PC-3 (cell line): ENCODE measurements at regions of chr14 and their contacts with region 1.

Region 1: DNA sequence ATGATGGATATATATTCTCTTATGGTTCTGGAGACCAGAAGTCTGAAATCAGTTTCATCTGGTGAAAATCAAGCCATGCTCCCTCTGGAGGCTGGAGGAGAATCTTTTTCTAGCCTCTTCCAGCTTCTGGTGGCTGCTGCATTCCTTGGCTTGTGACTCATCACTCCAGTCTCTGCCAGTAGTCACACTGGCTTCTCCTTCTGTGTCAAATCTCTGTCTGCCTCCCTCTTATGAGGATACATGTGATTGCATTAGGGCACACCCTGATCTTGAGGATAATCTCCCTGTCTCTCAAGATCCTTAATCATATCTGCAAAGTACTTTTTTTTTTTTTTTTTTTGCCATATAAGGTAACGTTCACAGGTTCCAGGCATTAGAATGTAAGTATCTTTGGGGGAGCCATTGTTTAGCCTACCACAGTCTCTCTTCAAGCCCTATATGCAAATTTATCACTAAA is 17.7 kb downstream of the DNAL1 start:
- DNase-seq: peak; percentile 95
- ATAC-seq: peak; percentile 99
- H3K4me3 ChIP-seq: no peak overlapping the region
- H3K27ac ChIP-seq: 0 out of 2 replicates have a peak overlapping the region, but pooled peaks have one; percentile 9
- H3K4me1 ChIP-seq: peaks cover 12% of the 10 kb centered on the region
- H3K27me3 ChIP-seq: no peaks in the 10 kb centered on the region
- CTCF ChIP-seq: peak; percentile 72

Region 2: DNA sequence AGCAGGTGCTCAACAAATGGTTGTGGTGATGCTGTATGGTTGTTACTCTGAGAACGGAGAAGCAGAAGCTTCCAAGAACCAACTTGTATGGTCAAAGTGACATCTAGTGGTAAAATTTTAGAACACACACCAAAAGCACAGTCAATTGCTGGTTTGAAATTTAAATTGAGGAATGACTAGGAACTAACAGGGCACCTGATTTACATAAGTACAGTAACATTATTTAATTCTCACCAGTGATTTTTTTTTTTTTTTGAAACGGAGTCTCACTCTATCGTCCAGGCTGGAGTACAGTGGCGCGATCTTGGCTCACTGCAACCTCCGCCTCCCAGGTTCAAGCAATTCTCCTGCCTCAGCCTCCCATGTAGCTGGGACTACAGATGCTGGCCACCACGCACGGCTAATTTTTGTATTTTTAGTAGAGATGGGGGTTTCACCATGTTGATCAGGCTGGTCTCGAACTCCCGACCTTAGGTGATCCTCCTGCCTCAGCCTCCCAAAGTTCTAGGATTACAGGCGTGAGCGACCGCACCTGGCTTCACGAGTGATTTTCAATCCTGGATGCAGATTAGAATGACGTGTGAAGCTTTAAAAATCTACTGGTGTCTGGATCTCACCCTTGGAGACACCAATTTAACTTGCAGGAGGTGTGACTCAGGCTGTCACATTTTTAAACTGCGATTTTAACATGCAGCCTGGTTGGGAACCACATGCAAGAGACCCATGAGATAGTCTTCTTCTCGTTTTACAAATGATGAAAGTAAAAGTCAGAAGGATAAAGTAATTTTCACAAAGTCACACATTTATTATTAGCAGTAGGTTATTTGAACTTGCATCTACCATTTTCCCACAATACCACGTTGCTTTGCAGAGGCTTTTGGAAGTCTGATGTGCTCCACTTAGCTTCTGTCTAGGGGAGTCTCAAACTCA is 190.1 kb before region 1 on chr14:
- CTCF ChIA-PET with region 1: no interaction called
- POLR2A ChIA-PET with region 1: no interaction called
- intact Hi-C with region 1: no loop called
- DNase-seq: peak; percentile 87
- ATAC-seq: peak; percentile 88
- H3K4me3 ChIP-seq: no peak overlapping the region
- H3K27ac ChIP-seq: no peak overlapping the region
- H3K4me1 ChIP-seq: no peaks in the 10 kb centered on the region
- H3K27me3 ChIP-seq: no peaks in the 10 kb centered on the region
- CTCF ChIP-seq: peak; percentile 89

Region 3: GRCh38 chr14:73696466-73697400 is 34.2 kb after region 1 on chr14:
- CTCF ChIA-PET with region 1: no interaction called
- POLR2A ChIA-PET with region 1: interaction called, 3 read pairs
- intact Hi-C with region 1: loop called (anchors 1 kb)
- DNase-seq: peak; percentile 97
- ATAC-seq: peak; percentile 91
- H3K4me3 ChIP-seq: peak overlapping the region; percentile 49
- H3K27ac ChIP-seq: peak overlapping the region; percentile 98
- H3K4me1 ChIP-seq: peaks cover 27% of the 10 kb centered on the region
- H3K27me3 ChIP-seq: no peaks in the 10 kb centered on the region
- CTCF ChIP-seq: no peak

Region 4: GRCh38 chr14:73713803-73714655 is 51.5 kb after region 1 on chr14 and contains the start of gene PNMA1:
- CTCF ChIA-PET with region 1: no interaction called
- POLR2A ChIA-PET with region 1: no interaction called
- intact Hi-C with region 1: loop called (anchors 5 kb)
- DNase-seq: peak; percentile 85
- ATAC-seq: peak; percentile 71
- H3K4me3 ChIP-seq: peak within 1 kb of the TSS; percentile 99
- H3K27ac ChIP-seq: peak within 1 kb of the TSS; percentile 78
- H3K4me1 ChIP-seq: peaks cover 14% of the 10 kb centered on the region
- H3K27me3 ChIP-seq: no peaks in the 10 kb centered on the region
- CTCF ChIP-seq: no peak
- total RNA-seq, gene PNMA1: 30.8 and 36.7 TPM in 2 replicates

Region 5: DNA sequence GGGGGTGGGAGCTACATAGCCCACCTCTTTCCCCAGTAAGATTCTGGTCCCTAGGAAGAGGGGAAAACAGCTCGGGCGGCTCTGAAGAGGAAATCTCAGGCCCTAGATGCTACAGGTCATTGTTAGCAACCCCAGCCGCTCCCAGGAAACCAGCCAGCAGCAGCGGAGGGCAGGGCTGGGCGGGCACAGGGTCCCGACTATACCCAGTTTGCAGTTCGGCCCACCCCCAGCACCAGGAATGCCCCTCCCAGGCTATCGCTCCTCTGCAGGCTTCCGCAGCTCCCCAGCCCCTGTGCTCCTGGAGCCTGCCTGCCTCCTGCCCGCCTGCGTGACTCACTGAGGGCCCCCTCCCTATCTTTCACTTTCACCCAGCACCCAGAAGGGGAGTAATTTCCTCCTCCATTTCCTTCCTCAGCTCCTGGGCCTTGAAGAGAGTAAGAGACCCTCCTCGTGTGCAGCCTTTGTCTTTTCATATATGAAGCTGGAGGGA is 78.9 kb after region 1 on chr14:
- CTCF ChIA-PET with region 1: no interaction called
- POLR2A ChIA-PET with region 1: no interaction called
- intact Hi-C with region 1: no loop called
- DNase-seq: peak; percentile 80
- ATAC-seq: peak; percentile 77
- H3K4me3 ChIP-seq: peak overlapping the region; percentile 59
- H3K27ac ChIP-seq: peak overlapping the region; percentile 92
- H3K4me1 ChIP-seq: peaks cover 68% of the 10 kb centered on the region
- H3K27me3 ChIP-seq: no peaks in the 10 kb centered on the region
- CTCF ChIP-seq: no peak

Region 6: GRCh38 chr14:73851644-73852382 is 189.3 kb after region 1 on chr14 and contains the start of gene PTGR2:
- CTCF ChIA-PET with region 1: no interaction called
- POLR2A ChIA-PET with region 1: no interaction called
- intact Hi-C with region 1: loop called (anchors 10 kb)
- DNase-seq: peak; percentile 97
- ATAC-seq: peak; percentile 85
- H3K4me3 ChIP-seq: peak within 1 kb of the TSS; percentile 73
- H3K27ac ChIP-seq: peak within 1 kb of the TSS; percentile 80
- H3K4me1 ChIP-seq: peaks cover 17% of the 10 kb centered on the region
- H3K27me3 ChIP-seq: no peaks in the 10 kb centered on the region
- CTCF ChIP-seq: no peak
- total RNA-seq, gene PTGR2: 6.2 and 7.9 TPM in 2 replicates

Region 7: DNA sequence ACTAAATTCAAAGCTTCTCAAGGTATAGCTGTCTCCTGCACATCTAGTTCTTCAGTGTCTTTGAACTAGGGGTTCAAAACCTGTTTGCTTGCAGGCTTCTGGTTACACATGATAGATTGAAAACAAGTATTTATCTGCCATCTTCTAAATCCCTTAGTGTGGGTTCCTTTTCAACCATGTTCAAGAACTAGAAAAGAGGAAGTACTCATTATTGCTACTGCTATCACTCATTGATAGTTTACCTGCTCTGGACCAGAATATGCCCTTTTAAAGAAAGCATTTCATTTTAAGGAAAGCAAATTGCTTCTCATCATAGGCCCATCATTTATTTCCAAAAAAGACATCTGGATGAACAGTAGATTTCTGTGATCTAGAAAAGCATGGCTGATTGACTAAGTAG is 539.6 kb after region 1 on chr14:
- CTCF ChIA-PET with region 1: no interaction called
- POLR2A ChIA-PET with region 1: no interaction called
- intact Hi-C with region 1: no loop called
- DNase-seq: no peak
- ATAC-seq: no peak
- H3K4me3 ChIP-seq: no peak overlapping the region
- H3K27ac ChIP-seq: no peak overlapping the region
- H3K4me1 ChIP-seq: no peaks in the 10 kb centered on the region
- H3K27me3 ChIP-seq: no peaks in the 10 kb centered on the region
- CTCF ChIP-seq: no peak